ENCODE measurements at regions of chr19 and their contacts with region 1.

Region 1: DNA sequence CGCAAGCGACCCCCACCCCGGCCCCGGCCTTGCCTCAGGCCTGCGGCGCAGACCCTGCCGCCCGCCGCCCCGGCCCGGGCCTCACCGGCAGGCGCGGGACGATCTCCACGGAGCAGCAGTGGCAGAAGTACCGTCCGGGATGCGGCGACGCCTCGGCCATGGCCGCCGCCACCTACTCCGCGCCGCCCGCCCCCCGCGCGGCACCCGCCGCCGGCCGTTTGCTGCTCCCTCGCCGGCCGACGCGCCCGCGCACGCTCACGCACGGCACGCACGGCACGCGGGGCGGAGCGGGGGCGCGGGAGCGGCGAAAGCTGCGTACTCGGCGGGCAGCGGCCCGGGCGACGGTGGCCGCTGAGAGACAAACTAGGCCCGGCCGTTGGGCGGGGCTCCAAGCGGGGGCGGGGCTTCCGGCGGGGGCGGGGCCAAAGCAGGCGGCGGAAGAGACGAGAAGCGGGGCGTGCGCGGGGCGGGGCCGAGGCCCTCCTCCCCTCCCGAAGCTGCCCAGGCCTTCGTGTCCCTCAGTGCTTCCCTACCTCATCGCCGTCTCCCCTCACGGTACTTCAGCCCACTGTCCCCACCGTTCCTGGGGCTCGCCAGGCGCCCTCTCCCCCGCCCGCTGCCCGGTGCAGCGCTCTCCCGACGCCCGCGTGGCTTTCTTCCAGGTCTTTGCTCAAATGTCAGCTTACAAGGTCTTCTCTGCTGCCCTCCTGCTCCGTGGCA is at the start of gene RNF126:
- DNase-seq: peak; percentile 96
- H3K4me3 ChIP-seq: peak within 1 kb of the TSS; percentile 79 to 100 (median 99)
- H3K27ac ChIP-seq: peak within 1 kb of the TSS; percentile 96 to 99 (median 96)
- H3K4me1 ChIP-seq: peaks cover 0 to 65% (median 60%) of the 10 kb centered on the region in 4 donors
- H3K27me3 ChIP-seq: no peaks in the 10 kb centered on the region
- CTCF ChIP-seq: no peak
- EP300 ChIP-seq: no peak
- POLR2A ChIP-seq: peak in 1 of 2 donors; percentile 66
- total RNA-seq, gene RNF126: 39.2 to 57.1 (median 55.5) TPM

Region 2: GRCh38 chr19:524062-524674 is 139.0 kb before region 1 on chr19:
- intact Hi-C with region 1: no loop called
- DNase-seq: peak; percentile 67
- H3K4me3 ChIP-seq: no peak overlapping the region
- H3K27ac ChIP-seq: no peak overlapping the region
- H3K4me1 ChIP-seq: no peaks in the 10 kb centered on the region
- H3K27me3 ChIP-seq: peaks cover 0 to 17% (median 6%) of the 10 kb centered on the region in 3 donors
- CTCF ChIP-seq: no peak
- EP300 ChIP-seq: no peak
- POLR2A ChIP-seq: no peak

Region 3: GRCh38 chr19:639253-640160 is 23.6 kb before region 1 on chr19 and contains the start of gene FGF22:
- intact Hi-C with region 1: loop called (anchors 2 kb)
- DNase-seq: peak; percentile 96
- H3K4me3 ChIP-seq: peak within 1 kb of the TSS; percentile 27 to 48 (median 45)
- H3K27ac ChIP-seq: peak within 1 kb of the TSS; percentile 29 to 67 (median 64)
- H3K4me1 ChIP-seq: peaks cover 0 to 22% (median 17%) of the 10 kb centered on the region in 4 donors
- H3K27me3 ChIP-seq: no peaks in the 10 kb centered on the region
- CTCF ChIP-seq: no peak
- EP300 ChIP-seq: no peak
- POLR2A ChIP-seq: no peak
- total RNA-seq, gene FGF22: 0.99 to 1.7 TPM in 2 of 4 donors, not detected in the others

Region 4: DNA sequence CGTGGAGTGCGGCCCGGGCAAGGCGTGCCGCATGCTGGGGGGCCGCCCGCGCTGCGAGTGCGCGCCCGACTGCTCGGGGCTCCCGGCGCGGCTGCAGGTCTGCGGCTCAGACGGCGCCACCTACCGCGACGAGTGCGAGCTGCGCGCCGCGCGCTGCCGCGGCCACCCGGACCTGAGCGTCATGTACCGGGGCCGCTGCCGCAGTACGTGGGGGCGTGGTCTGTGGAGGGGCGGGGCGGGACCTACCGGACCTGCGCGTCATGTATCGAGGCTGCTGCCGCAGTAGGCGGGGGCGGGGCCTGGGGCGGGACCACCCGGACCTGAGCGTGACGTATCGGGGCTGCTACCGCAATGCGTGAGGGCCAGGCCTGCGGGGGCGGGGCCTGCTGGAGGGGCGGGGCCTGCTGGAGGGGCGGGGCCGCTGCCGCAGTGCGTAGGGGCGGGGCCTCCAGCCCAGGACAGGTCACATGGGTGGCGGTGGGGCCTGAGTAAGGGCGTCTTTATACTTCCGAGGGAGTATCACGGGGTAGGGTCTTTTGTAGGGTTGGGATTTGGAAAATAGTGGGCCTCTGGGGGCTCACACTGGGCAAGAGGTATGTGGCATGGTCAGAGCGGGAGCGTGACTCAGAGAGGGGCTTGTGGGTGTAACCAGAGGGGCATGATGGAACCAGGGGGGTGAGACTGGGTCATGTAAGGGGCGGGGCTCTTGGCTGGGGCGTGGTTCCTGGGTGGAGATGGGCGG is 17.3 kb after region 1 on chr19:
- intact Hi-C with region 1: loop called (anchors 2 kb)
- DNase-seq: peak; percentile 100
- H3K4me3 ChIP-seq: peak overlapping the region; percentile 67 to 96 (median 84)
- H3K27ac ChIP-seq: peak overlapping the region; percentile 97 to 100 (median 98)
- H3K4me1 ChIP-seq: peaks cover 0 to 47% (median 41%) of the 10 kb centered on the region in 4 donors
- H3K27me3 ChIP-seq: no peaks in the 10 kb centered on the region
- CTCF ChIP-seq: peak in 1 of 4 experiments; percentile 43
- EP300 ChIP-seq: peak in 1 of 4 donors; percentile 62
- POLR2A ChIP-seq: no peak

Region 5: GRCh38 chr19:708154-709143 is 45.3 kb after region 1 on chr19 and contains the start of gene PALM:
- intact Hi-C with region 1: loop called (anchors 2 kb)
- DNase-seq: peak; percentile 74
- H3K4me3 ChIP-seq: peak within 1 kb of the TSS; percentile 68 to 95 (median 84)
- H3K27ac ChIP-seq: peak within 1 kb of the TSS; percentile 81 to 83 (median 82)
- H3K4me1 ChIP-seq: peaks cover 0 to 41% (median 27%) of the 10 kb centered on the region in 4 donors
- H3K27me3 ChIP-seq: peaks cover 0 to 12% (median 6%) of the 10 kb centered on the region in 3 donors
- CTCF ChIP-seq: peak in 1 of 4 experiments; percentile 20
- EP300 ChIP-seq: no peak
- POLR2A ChIP-seq: no peak
- total RNA-seq, gene PALM: 30.4 to 91.4 (median 35.9) TPM

Region 6: GRCh38 chr19:732148-733069 is 69.3 kb after region 1 on chr19:
- intact Hi-C with region 1: loop called (anchors 1 kb)
- DNase-seq: no peak
- H3K4me3 ChIP-seq: no peak overlapping the region
- H3K27ac ChIP-seq: no peak overlapping the region
- H3K4me1 ChIP-seq: no peaks in the 10 kb centered on the region
- H3K27me3 ChIP-seq: no peaks in the 10 kb centered on the region
- CTCF ChIP-seq: no peak
- EP300 ChIP-seq: no peak
- POLR2A ChIP-seq: no peak

Region 7: GRCh38 chr19:796692-797527 is 133.8 kb after region 1 on chr19 and contains the start of gene PTBP1:
- intact Hi-C with region 1: loop called (anchors 5 kb)
- DNase-seq: peak; percentile 100
- H3K4me3 ChIP-seq: peak within 1 kb of the TSS; percentile 76 to 100 (median 96)
- H3K27ac ChIP-seq: peak within 1 kb of the TSS; percentile 93 to 100 (median 97)
- H3K4me1 ChIP-seq: peaks cover 0 to 51% (median 48%) of the 10 kb centered on the region in 4 donors
- H3K27me3 ChIP-seq: no peaks in the 10 kb centered on the region
- CTCF ChIP-seq: no peak
- EP300 ChIP-seq: no peak
- POLR2A ChIP-seq: no peak
- total RNA-seq, gene PTBP1: 53.8 to 94.5 (median 71.7) TPM